ENCODE measurements at regions of chr7 and their contacts with region 1.

Region 1: GRCh38 chr7:90262438-90262837 is 17.5 kb downstream of the CFAP69 start:
- DNase-seq: no peak
- H3K4me3 ChIP-seq: no peak overlapping the region
- H3K27ac ChIP-seq: no peak overlapping the region
- H3K4me1 ChIP-seq: peaks cover 0 to 5% (median 2%) of the 10 kb centered on the region in 4 donors
- H3K27me3 ChIP-seq: no peaks in the 10 kb centered on the region
- CTCF ChIP-seq: peak; percentile 53 to 67 (median 60)
- EP300 ChIP-seq: no peak
- POLR2A ChIP-seq: no peak

Region 2: DNA sequence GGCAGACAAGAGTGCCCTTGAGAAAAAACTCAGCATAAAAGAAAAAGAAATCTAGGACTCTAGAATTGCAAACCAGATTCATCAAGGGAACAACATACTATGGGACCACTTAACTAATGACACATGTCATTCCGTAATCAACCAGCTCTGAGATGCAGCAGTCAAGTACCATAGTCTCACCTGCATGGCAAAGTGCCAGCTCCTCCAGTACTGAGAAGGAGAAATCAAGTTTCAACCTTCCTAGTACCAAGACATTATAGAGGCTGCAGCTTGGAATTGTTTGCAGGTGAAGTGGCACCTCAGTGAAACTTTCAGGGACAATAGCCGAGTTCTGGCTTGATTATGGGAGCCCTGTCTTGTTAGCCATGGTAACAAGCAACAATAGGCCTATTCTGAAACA is 96.7 kb before region 1 on chr7:
- in situ Hi-C with region 1: loop called (anchors 10 to 25 kb)
- intact Hi-C with region 1: no loop called
- DNase-seq: peak; percentile 80
- H3K4me3 ChIP-seq: no peak overlapping the region
- H3K27ac ChIP-seq: peak overlapping the region; percentile 31 to 69 (median 52)
- H3K4me1 ChIP-seq: peaks cover 0 to 26% (median 7%) of the 10 kb centered on the region in 4 donors
- H3K27me3 ChIP-seq: no peaks in the 10 kb centered on the region
- CTCF ChIP-seq: peak in 2 of 5 experiments; percentile 16 to 40
- EP300 ChIP-seq: no peak
- POLR2A ChIP-seq: no peak

Measured in transverse colon (tissue), 4 donors.